Activated B cell treated with CpG ODN at 0.5 μM for 24 hours (primary cell): ENCODE measurements at regions of chrX and their contacts with region 1.

Region 1: DNA sequence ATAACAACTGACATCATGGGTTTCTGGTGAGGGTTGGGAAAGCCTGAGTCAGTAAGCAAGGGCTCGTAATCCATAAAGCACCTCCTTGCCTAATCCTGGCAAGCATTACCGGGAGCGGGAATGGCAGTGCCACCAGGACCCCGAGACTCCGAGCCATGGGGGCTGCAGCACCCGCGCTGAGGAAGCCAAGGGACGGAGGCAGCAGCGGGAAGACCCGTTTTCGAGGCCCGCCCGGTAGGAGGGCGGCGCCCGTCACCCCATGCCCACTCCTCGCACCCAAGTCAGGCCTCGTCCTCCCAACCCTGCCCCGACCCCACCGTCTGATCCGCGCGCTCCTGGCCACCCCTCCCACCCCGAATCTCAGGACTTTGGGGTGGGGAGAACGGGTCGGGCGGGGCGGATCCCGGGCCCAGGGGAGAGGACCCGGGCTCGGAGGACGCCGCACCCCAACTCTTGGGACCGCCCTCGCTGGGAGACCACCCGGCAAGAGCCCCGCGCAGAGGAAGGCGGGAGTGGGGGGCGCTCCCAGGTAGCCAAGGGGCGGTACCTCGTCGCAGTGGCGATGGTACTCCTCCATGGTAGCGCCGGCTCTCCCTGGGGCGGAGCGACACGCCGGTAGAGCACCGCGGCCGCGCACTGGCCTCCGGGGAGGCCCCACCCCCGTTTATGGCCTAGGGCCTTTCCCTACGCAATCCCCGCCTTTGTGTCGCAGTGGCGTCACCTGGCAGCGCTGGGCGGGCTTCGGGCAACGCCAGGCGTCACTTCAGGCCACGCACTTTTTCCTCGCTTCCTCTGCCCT is at the start of gene DYNLT3:
- DNase-seq: peak; percentile 72
- ATAC-seq: peak; percentile 99
- H3K4me3 Mint-ChIP-seq: peak within 1 kb of the TSS; percentile 81
- H3K27ac Mint-ChIP-seq: peak within 1 kb of the TSS; percentile 86
- H3K4me1 Mint-ChIP-seq: peaks cover 20% of the 10 kb centered on the region
- H3K27me3 Mint-ChIP-seq: no peaks in the 10 kb centered on the region
- CTCF ChIP-seq: no peak
- total RNA-seq, gene DYNLT3: 17.7 and 19.1 TPM in 2 replicates

Region 2: DNA sequence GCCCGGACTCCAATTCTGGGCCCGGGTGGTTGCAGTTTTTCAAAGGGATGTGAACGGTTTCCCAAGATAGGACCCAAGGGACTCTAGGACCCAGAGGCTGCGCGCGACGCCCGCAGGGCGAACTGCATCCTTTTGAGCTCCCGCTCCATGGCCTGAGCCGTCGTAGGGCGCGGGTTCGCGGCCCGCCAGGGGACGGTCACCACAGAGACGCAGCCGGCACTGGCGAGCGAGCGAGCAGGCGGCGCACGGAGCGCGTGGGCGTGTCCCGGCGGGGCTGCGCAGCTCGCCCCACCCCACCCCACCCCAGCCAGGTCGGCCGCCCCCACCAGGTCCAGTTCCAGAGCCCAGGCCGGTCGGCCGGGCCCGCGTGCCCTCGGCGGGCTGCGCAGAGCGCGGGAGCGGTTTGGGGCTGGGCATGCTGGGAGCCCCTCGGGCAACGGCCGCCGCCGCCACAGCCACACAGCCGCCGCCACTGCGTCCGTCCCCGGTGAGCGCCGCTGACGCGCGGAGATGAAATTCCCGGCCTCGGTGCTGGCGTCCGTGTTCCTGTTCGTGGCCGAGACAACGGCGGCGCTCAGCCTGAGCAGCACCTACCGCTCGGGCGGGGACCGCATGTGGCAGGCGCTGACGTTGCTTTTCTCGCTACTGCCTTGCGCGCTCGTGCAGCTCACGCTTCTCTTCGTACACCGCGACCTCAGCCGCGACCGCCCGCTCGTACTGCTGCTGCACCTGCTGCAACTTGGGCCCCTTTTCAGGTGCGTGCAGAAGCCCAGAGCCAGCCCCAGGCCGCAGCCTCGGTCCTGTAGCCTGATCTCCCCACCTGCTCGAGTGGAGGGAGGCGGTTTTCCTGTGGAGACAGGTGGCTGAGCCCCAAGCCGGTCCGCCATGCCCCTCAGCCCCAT is 161.4 kb before region 1 on chrX and contains the start of gene XK:
- CTCF ChIA-PET with region 1: no interaction called
- POLR2A ChIA-PET with region 1: no interaction called
- intact Hi-C with region 1: loop called (anchors 10 kb)
- DNase-seq: peak; percentile 19
- ATAC-seq: peak; percentile 78
- H3K4me3 Mint-ChIP-seq: peak within 1 kb of the TSS; percentile 78
- H3K27ac Mint-ChIP-seq: no peak within 1 kb of the TSS
- H3K4me1 Mint-ChIP-seq: peaks cover 2% of the 10 kb centered on the region
- H3K27me3 Mint-ChIP-seq: no peaks in the 10 kb centered on the region
- CTCF ChIP-seq: no peak
- total RNA-seq, gene XK: 0.11 and 0.24 TPM in 2 replicates